Heart right ventricle (tissue), 16 donors: ENCODE measurements at regions of chr6 and their contacts with region 1.

Region 1: GRCh38 chr6:29864037-29864795 is 36.6 kb downstream of the HLA-G start:
- DNase-seq: no peak
- ATAC-seq: peak in 1 of 8 donors; percentile 55
- H3K4me3 ChIP-seq: no peak overlapping the region
- H3K27ac ChIP-seq: no peak overlapping the region
- H3K4me1 ChIP-seq: no peaks in the 10 kb centered on the region
- H3K27me3 ChIP-seq: peaks cover 0 to 42% (median 28%) of the 10 kb centered on the region in 7 donors
- CTCF ChIP-seq: no peak

Region 2: GRCh38 chr6:29216528-29216927 is 647.7 kb before region 1 on chr6:
- intact Hi-C with region 1: no loop called
- DNase-seq: no peak
- ATAC-seq: no peak
- H3K4me3 ChIP-seq: no peak overlapping the region
- H3K27ac ChIP-seq: no peak overlapping the region
- H3K4me1 ChIP-seq: no peaks in the 10 kb centered on the region
- H3K27me3 ChIP-seq: peaks cover 0 to 6% (median 0%) of the 10 kb centered on the region in 7 donors
- CTCF ChIP-seq: no peak

Region 3: GRCh38 chr6:29909985-29910384 is 45.8 kb after region 1 on chr6:
- intact Hi-C with region 1: loop called in 2 of 10 experiments (anchors 5 to 10 kb)
- DNase-seq: no peak
- ATAC-seq: no peak
- H3K4me3 ChIP-seq: no peak overlapping the region
- H3K27ac ChIP-seq: no peak overlapping the region
- H3K4me1 ChIP-seq: no peaks in the 10 kb centered on the region
- H3K27me3 ChIP-seq: no peaks in the 10 kb centered on the region
- CTCF ChIP-seq: no peak

Region 4: GRCh38 chr6:29917857-29918256 is 53.6 kb after region 1 on chr6:
- intact Hi-C with region 1: loop called in 3 of 10 experiments (anchors 2 to 10 kb)
- DNase-seq: no peak
- ATAC-seq: no peak
- H3K4me3 ChIP-seq: no peak overlapping the region
- H3K27ac ChIP-seq: no peak overlapping the region
- H3K4me1 ChIP-seq: no peaks in the 10 kb centered on the region
- H3K27me3 ChIP-seq: no peaks in the 10 kb centered on the region
- CTCF ChIP-seq: no peak